Activated T-helper 1 cell treated with anti-CD3 and anti-CD28 coated beads, Interleukin-12 subunit alpha, Interleukin-12 subunit beta, Interleukin-2, Interleukin-4 antibody, amounts not matched to agents 30 ng/mL and 10 ng/mL and 1 ng/mL, durations not matched to agents 14 hours and 24 hours and 36 hours (primary cell): ENCODE measurements at regions of chr17 and their contacts with region 1.

Region 1: GRCh38 chr17:17752089-17752820 is 71.0 kb downstream of the RAI1 start:
- DNase-seq: peak; percentile 97
- H3K4me3 Mint-ChIP-seq: peak overlapping the region; percentile 91
- H3K27ac Mint-ChIP-seq: peak overlapping the region; percentile 95
- H3K4me1 Mint-ChIP-seq: peaks cover 46% of the 10 kb centered on the region
- H3K27me3 Mint-ChIP-seq: no peaks in the 10 kb centered on the region

Region 2: GRCh38 chr17:17041571-17042380 is 710.5 kb before region 1 on chr17:
- intact Hi-C with region 1: loop called (anchors 10 kb)
- DNase-seq: peak; percentile 94
- H3K4me3 Mint-ChIP-seq: peak overlapping the region; percentile 80
- H3K27ac Mint-ChIP-seq: no peak overlapping the region
- H3K4me1 Mint-ChIP-seq: peaks cover 38% of the 10 kb centered on the region
- H3K27me3 Mint-ChIP-seq: peaks cover 2% of the 10 kb centered on the region

Region 3: GRCh38 chr17:17681187-17681848 is 70.9 kb before region 1 on chr17 and contains the start of gene RAI1:
- intact Hi-C with region 1: loop called (anchors 1 kb)
- DNase-seq: peak; percentile 64
- H3K4me3 Mint-ChIP-seq: peak within 1 kb of the TSS; percentile 89
- H3K27ac Mint-ChIP-seq: peak within 1 kb of the TSS; percentile 84
- H3K4me1 Mint-ChIP-seq: peaks cover 22% of the 10 kb centered on the region
- H3K27me3 Mint-ChIP-seq: peaks cover 10% of the 10 kb centered on the region
- total RNA-seq, gene RAI1: 31.1 and 32.3 TPM in 2 replicates

Region 4: DNA sequence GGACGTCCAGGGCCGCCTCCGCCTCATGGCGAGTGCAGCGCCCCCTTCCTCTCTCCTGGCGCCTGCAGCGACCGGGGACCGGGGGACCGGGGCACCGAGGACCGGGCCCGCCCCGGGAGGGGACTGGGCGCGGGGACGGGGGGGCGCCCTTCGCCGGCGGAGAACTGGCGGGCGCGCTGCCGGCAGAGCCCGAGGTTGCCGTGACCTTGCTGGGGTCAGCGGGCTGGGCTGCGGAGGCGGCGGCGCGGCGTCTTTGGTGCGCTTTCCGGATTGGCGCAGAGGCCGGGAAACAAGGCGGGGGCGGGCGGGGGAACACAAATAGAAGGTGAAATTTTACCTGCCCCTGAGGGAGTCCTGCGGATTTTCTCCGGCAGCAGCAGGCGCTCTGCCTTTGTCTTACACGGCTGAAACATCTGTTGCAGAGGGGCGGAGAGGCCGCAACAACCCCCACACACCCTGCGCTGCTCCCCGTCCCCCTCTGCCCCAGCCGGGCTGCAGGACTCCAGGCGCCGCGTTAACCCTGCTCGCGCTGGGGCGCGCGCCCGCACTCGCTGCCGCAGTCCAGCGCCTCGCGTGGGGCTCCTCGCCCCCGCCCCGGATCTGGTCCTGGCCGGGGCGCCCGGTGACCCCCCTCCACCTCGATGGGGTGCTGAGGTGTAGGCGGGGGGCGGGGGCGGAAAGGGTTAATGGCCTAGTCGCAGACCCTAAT is 31.0 kb after region 1 on chr17:
- intact Hi-C with region 1: loop called (anchors 2 kb)
- DNase-seq: peak; percentile 47
- H3K4me3 Mint-ChIP-seq: peak overlapping the region; percentile 76
- H3K27ac Mint-ChIP-seq: no peak overlapping the region
- H3K4me1 Mint-ChIP-seq: no peaks in the 10 kb centered on the region
- H3K27me3 Mint-ChIP-seq: peaks cover 9% of the 10 kb centered on the region

Region 5: DNA sequence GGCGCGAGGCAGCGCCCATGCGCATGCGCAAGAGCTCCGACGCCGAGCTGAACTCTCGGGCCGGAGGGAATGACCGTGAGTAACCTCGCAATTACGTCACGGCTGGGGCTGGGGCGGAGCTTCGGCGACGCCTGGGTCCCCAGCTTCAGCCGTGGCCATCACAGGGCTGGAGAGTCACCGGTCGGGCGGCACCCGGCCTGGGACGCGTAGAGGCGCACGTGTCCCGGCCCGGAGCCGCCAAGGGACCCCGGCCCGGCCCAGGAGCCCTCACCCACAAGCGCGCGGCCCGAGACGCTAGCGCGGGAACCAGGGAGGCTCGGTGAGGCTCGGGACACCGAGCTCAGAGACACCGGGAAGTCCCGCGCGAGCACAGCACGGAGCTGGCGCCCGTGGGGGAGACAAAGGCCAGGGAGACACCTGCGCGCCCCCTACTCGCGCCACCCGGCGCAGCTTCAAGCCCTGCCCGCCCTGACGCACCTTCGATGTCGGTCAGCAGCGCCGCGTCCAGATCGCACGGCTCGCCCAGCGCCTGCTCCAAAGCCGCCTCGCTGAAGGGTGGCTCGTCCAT is 84.1 kb after region 1 on chr17:
- intact Hi-C with region 1: loop called (anchors 1 kb)
- DNase-seq: peak; percentile 95
- H3K4me3 Mint-ChIP-seq: peak overlapping the region; percentile 93
- H3K27ac Mint-ChIP-seq: peak overlapping the region; percentile 86
- H3K4me1 Mint-ChIP-seq: peaks cover 69% of the 10 kb centered on the region
- H3K27me3 Mint-ChIP-seq: no peaks in the 10 kb centered on the region

Region 6: GRCh38 chr17:18087610-18088491 is 335.6 kb after region 1 on chr17 and contains the start of gene DRG2:
- intact Hi-C with region 1: loop called (anchors 5 kb)
- DNase-seq: peak; percentile 84
- H3K4me3 Mint-ChIP-seq: peak within 1 kb of the TSS; percentile 95
- H3K27ac Mint-ChIP-seq: peak within 1 kb of the TSS; percentile 96
- H3K4me1 Mint-ChIP-seq: peaks cover 17% of the 10 kb centered on the region
- H3K27me3 Mint-ChIP-seq: no peaks in the 10 kb centered on the region
- total RNA-seq, gene DRG2: 67.5 and 69.2 TPM in 2 replicates